Caco-2 (cell line): ENCODE measurements at regions of chr2 and their contacts with region 1.

Region 1: GRCh38 chr2:37570773-37571586 is 100.5 kb downstream of the CDC42EP3 start:
- DNase-seq: peak in 1 of 2 experiments; percentile 69
- H3K4me3 ChIP-seq: no peak overlapping the region
- H3K4me3 Mint-ChIP-seq: peak overlapping the region; percentile 35
- H3K27ac Mint-ChIP-seq: peak overlapping the region; percentile 92
- H3K4me1 ChIP-seq: peaks cover 42% of the 10 kb centered on the region
- H3K4me1 Mint-ChIP-seq: peaks cover 52% of the 10 kb centered on the region
- H3K27me3 ChIP-seq: no peaks in the 10 kb centered on the region
- H3K27me3 Mint-ChIP-seq: no peaks in the 10 kb centered on the region
- CTCF ChIP-seq: no peak

Region 2: DNA sequence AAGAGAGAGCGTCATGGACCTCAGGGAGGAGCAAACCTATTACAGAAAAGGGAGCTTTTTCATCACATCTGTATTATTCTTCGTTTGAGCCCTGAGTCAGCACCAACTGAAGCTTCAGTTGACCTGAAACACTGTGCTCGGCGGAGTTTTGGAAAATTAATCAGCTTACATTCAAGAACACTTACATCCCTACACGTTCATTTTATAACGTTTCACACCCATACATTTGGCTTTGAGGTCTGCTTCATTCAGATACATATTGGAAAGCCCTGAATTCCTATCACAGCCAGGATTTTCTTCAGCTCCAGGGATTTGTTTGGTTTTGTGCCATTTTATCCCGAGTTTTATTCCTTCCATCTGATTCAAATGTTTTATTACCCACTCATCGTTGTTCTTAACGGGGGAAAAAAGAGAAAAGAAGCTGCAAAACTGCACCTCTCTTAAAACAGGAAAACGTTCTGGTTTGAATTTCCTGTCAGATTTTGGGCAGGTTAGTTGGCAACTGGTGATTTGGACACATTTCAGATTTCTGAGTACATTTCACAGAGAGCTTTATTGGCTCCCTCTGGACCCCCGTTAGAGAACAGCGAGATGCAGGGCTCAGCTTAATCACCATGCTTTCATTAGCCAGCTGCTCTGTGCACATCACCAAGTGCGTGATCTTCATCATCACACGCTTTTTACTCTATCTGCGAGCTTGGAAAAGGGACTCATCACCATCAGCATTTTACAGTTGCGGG is 11.7 kb after region 1 on chr2:
- CTCF ChIA-PET with region 1: no interaction called
- POLR2A ChIA-PET with region 1: interaction called, 9 read pairs
- intact Hi-C with region 1: loop called (anchors 1 kb)
- DNase-seq: no peak
- H3K4me3 ChIP-seq: no peak overlapping the region
- H3K4me3 Mint-ChIP-seq: no peak overlapping the region
- H3K27ac Mint-ChIP-seq: peak overlapping the region; percentile 43
- H3K4me1 ChIP-seq: peaks cover 48% of the 10 kb centered on the region
- H3K4me1 Mint-ChIP-seq: peaks cover 30% of the 10 kb centered on the region
- H3K27me3 ChIP-seq: no peaks in the 10 kb centered on the region
- H3K27me3 Mint-ChIP-seq: no peaks in the 10 kb centered on the region
- CTCF ChIP-seq: no peak

Region 3: DNA sequence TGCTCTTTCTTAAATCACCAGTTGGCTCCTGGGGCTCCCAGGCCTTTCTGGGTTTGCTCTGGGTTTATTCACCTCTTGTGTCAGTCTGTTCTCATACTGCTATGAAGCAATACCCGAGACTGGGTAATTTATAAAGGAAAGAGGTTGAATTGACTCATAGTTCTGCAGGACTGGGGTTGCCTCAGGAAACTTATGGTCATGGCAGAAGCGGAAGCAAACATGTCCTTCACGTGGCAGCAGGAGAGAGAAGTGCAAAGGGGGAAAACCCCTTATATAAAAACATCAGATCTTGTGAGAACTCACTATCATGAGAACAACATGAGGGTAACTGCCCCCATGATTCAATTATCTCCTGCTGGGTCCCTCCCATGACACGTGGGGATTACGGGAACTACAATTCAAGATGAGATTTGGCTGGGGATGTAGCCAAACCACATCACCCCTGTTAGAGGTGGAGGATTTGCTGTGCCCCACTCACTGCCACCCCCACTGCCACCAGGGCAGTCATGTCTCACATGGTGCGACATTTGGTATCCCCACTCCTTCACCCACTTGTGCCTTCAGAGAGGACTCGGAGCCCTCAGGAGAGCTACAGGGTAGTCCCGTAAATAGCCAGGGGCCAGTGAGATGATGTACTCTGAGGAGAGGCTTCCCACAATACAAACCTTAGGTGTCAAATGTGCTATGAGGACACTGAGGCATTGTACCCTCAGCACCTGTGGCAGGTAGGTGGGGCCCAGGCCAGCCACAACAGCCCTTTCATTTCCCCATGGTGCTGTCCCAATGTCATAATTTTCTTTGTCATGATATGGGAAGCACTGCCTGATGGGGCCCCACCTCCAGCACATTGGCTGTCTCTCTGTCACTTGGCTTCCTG is 64.8 kb after region 1 on chr2:
- CTCF ChIA-PET with region 1: no interaction called
- POLR2A ChIA-PET with region 1: no interaction called
- intact Hi-C with region 1: loop called (anchors 2 kb)
- DNase-seq: no peak
- H3K4me3 ChIP-seq: no peak overlapping the region
- H3K4me3 Mint-ChIP-seq: no peak overlapping the region
- H3K27ac Mint-ChIP-seq: peak overlapping the region; percentile 5
- H3K4me1 ChIP-seq: no peaks in the 10 kb centered on the region
- H3K4me1 Mint-ChIP-seq: peaks cover 12% of the 10 kb centered on the region
- H3K27me3 ChIP-seq: no peaks in the 10 kb centered on the region
- H3K27me3 Mint-ChIP-seq: no peaks in the 10 kb centered on the region
- CTCF ChIP-seq: no peak

Region 4: GRCh38 chr2:37672104-37672869 is 101.3 kb after region 1 on chr2:
- CTCF ChIA-PET with region 1: no interaction called
- POLR2A ChIA-PET with region 1: no interaction called
- intact Hi-C with region 1: loop called (anchors 1 kb)
- DNase-seq: peak; percentile 94 to 95
- H3K4me3 ChIP-seq: peak overlapping the region; percentile 98
- H3K4me3 Mint-ChIP-seq: peak overlapping the region; percentile 73
- H3K27ac Mint-ChIP-seq: peak overlapping the region; percentile 20
- H3K4me1 ChIP-seq: peaks cover 47% of the 10 kb centered on the region
- H3K4me1 Mint-ChIP-seq: peaks cover 40% of the 10 kb centered on the region
- H3K27me3 ChIP-seq: no peaks in the 10 kb centered on the region
- H3K27me3 Mint-ChIP-seq: no peaks in the 10 kb centered on the region
- CTCF ChIP-seq: no peak

Region 5: GRCh38 chr2:37877457-37878315 is 306.7 kb after region 1 on chr2:
- CTCF ChIA-PET with region 1: interaction called, 8 read pairs
- POLR2A ChIA-PET with region 1: no interaction called
- intact Hi-C with region 1: loop called (anchors 2 kb)
- DNase-seq: peak in 1 of 2 experiments; percentile 74
- H3K4me3 ChIP-seq: no peak overlapping the region
- H3K4me3 Mint-ChIP-seq: no peak overlapping the region
- H3K27ac Mint-ChIP-seq: no peak overlapping the region
- H3K4me1 ChIP-seq: no peaks in the 10 kb centered on the region; the same call in 1 of the 2 replicates
- H3K4me1 Mint-ChIP-seq: peaks cover 9% of the 10 kb centered on the region
- H3K27me3 ChIP-seq: no peaks in the 10 kb centered on the region
- H3K27me3 Mint-ChIP-seq: no peaks in the 10 kb centered on the region
- CTCF ChIP-seq: peak; percentile 68 to 80

Region 6: GRCh38 chr2:37912056-37912455 is 341.1 kb after region 1 on chr2:
- CTCF ChIA-PET with region 1: no interaction called
- POLR2A ChIA-PET with region 1: no interaction called
- intact Hi-C with region 1: no loop called
- DNase-seq: no peak
- H3K4me3 ChIP-seq: no peak overlapping the region
- H3K4me3 Mint-ChIP-seq: no peak overlapping the region
- H3K27ac Mint-ChIP-seq: no peak overlapping the region
- H3K4me1 ChIP-seq: no peaks in the 10 kb centered on the region
- H3K4me1 Mint-ChIP-seq: no peaks in the 10 kb centered on the region
- H3K27me3 ChIP-seq: no peaks in the 10 kb centered on the region
- H3K27me3 Mint-ChIP-seq: no peaks in the 10 kb centered on the region
- CTCF ChIP-seq: no peak